A673 (cell line): ENCODE measurements at regions of chr3 and their contacts with region 1.

Region 1: DNA sequence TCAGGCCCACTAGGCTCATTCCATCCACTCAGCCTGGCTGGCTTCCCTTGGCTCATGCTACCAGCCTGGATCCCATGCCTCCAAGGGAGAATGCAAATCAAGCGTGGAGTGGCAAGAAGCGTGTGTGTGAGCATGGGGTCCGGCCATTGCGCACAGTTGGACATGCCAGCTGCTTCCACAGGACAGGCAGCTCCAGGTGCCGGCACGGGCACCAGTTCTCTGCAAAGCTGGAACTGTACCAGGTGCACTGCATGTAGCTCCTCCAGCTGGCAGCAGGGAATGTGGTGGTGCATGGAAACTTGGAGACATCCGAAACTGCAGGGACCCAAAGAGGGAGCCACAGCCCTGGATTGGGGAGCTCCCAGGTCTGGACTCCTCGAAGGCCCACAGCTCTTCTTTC is 449.8 kb downstream of the EPHA6 start:
- DNase-seq: no peak
- H3K4me3 ChIP-seq: no peak overlapping the region
- H3K27ac ChIP-seq: no peak overlapping the region
- H3K4me1 ChIP-seq: no peaks in the 10 kb centered on the region
- H3K27me3 ChIP-seq: no peaks in the 10 kb centered on the region
- CTCF ChIP-seq: no peak

Region 2: DNA sequence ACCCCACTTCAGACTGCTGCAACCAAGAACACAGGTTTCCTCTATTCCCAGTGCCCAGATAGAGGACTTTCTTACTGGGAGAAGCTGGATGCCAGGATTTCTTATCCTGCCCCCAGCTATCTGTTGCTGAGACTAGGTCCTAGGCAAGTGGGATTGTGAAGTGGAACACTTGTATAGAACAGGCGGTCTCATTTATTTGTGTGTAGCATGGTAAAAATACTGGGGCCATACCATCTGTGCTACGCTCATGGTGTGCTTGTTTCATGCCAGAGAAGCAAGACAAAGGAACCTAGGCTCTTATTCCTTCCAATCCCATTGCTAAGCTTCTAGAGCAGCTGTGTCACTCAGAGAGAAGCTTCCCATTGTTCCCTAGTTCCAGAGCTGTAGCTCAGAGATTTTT is 641.3 kb before region 1 on chr3:
- CTCF ChIA-PET with region 1: no interaction called
- POLR2A ChIA-PET with region 1: no interaction called
- intact Hi-C with region 1: no loop called
- DNase-seq: no peak
- H3K4me3 ChIP-seq: no peak overlapping the region
- H3K27ac ChIP-seq: no peak overlapping the region
- H3K4me1 ChIP-seq: no peaks in the 10 kb centered on the region
- H3K27me3 ChIP-seq: no peaks in the 10 kb centered on the region
- CTCF ChIP-seq: no peak

Region 3: DNA sequence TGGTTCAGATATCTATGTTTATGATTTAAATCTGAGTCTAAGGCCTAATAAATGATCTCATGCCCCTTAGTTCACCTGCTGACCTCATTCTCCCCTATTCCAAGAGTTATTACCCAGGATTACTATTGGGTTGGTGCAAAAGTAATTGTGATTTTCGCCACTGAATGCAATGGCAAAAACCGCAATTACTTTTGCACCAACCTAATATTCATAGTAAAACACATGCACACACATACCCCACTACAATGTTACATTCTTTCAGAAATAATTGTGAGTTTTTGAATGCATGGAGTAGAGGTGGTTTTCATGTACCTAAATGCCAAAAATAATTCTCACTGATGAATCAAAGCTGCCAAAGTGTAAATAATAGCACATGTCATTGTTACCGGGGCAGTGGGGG is 598.1 kb before region 1 on chr3:
- CTCF ChIA-PET with region 1: no interaction called
- POLR2A ChIA-PET with region 1: no interaction called
- intact Hi-C with region 1: no loop called
- DNase-seq: no peak
- H3K4me3 ChIP-seq: no peak overlapping the region
- H3K27ac ChIP-seq: no peak overlapping the region
- H3K4me1 ChIP-seq: no peaks in the 10 kb centered on the region
- H3K27me3 ChIP-seq: no peaks in the 10 kb centered on the region
- CTCF ChIP-seq: no peak

Region 4: DNA sequence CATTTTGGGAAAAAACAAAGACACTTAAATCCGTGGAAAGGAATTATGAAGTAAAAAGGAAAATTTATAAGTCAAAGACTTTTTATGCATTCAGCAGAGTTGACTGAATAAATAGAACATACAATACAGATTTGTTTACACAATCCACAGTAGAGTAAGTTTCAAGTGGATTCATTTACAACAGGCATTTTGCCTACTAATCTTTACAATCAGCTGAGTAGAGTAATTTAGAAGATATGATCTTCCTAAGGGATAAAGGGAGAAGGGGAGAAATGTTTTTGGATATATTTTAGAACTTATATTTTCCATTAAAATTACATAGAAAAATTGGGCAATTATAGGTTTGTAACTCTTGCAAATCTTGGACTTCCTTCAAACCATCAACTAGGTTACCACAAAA is 59.5 kb before region 1 on chr3:
- CTCF ChIA-PET with region 1: no interaction called
- POLR2A ChIA-PET with region 1: no interaction called
- intact Hi-C with region 1: loop called (anchors 10 kb)
- DNase-seq: no peak
- H3K4me3 ChIP-seq: no peak overlapping the region
- H3K27ac ChIP-seq: no peak overlapping the region
- H3K4me1 ChIP-seq: no peaks in the 10 kb centered on the region
- H3K27me3 ChIP-seq: no peaks in the 10 kb centered on the region
- CTCF ChIP-seq: no peak

Region 5: DNA sequence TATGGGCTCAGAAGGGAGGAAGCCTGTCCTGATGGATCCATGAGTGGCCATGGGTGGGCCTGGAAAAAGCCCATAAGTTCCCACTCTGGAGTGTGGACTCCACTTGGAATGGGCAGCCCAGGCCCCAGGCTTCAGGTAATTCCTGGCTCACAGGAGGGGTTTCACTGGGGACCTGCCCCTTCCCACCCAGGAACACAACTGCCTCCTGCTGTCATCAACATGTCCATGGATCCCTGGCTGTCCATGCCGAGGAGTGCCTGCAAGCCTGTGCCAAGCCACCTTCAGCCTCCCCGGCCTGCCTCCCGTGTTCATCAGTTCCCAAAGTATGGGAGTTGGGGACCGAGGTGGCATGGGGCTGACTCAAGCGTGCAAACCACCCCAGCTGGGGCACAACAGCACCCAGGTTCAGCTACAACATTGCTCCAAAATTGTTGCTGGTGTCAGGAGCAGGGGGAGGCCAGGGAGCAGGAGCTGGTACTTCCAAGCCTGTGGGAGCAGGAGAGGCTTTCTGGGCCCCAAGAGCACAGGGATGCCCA is 29.5 kb after region 1 on chr3:
- CTCF ChIA-PET with region 1: no interaction called
- POLR2A ChIA-PET with region 1: no interaction called
- intact Hi-C with region 1: no loop called
- DNase-seq: no peak
- H3K4me3 ChIP-seq: no peak overlapping the region
- H3K27ac ChIP-seq: no peak overlapping the region
- H3K4me1 ChIP-seq: no peaks in the 10 kb centered on the region
- H3K27me3 ChIP-seq: no peaks in the 10 kb centered on the region
- CTCF ChIP-seq: no peak